Breast epithelium (tissue), 4 donors: ENCODE measurements at regions of chrX and their contacts with region 1.

Region 1: GRCh38 chrX:41739871-41740270 is 15.9 kb downstream of the GPR82 start:
- DNase-seq: no peak
- H3K4me3 ChIP-seq: no peak overlapping the region
- H3K27ac ChIP-seq: no peak overlapping the region
- H3K4me1 ChIP-seq: no peaks in the 10 kb centered on the region
- H3K27me3 ChIP-seq: peaks cover 0 to 29% of the 10 kb centered on the region in 2 donors
- CTCF ChIP-seq: no peak
- POLR2A ChIP-seq: no peak

Region 2: DNA sequence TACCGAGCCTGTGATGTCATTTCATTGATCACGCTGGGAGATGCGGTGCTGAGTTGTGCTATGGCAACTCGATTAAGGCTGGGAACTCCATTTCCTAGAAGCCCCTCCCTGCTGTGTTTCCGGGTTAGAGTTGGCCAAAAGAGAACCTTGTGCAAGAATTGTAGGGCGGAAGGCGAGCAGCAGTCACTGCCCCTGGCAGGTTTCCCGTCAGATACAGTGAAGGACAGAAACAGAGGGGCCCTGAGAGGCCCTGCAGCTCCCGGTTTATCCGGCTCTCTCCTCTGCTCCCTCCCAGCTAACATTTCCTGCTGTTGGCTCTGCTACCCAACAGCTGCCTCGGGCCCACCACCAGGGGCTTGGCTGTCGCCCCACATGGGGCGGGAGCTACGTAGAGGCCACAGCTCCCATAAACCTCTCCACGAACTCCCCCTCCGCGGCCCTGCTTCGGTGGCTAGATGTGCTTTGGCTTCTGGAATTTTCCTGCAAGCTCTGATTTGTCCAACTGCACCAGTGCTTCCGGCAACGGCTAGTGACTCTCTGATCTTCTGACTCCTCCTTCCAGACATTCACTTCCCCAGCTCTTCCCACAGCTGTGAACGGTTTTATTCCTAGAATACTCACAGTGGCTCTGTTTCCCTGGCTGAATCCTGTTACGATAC is 729.6 kb before region 1 on chrX:
- intact Hi-C with region 1: no loop called
- DNase-seq: peak; percentile 53 to 70
- H3K4me3 ChIP-seq: peak overlapping the region; percentile 29 to 64 (median 32)
- H3K27ac ChIP-seq: peak overlapping the region; percentile 78 to 96
- H3K4me1 ChIP-seq: no peaks in the 10 kb centered on the region
- H3K27me3 ChIP-seq: peaks cover 0 to 41% of the 10 kb centered on the region in 2 donors
- CTCF ChIP-seq: peak in 1 of 3 donors; percentile 27
- POLR2A ChIP-seq: no peak

Region 3: GRCh38 chrX:41353985-41354384 is 385.9 kb before region 1 on chrX:
- intact Hi-C with region 1: no loop called
- DNase-seq: no peak
- H3K4me3 ChIP-seq: no peak overlapping the region
- H3K27ac ChIP-seq: no peak overlapping the region
- H3K4me1 ChIP-seq: no peaks in the 10 kb centered on the region
- H3K27me3 ChIP-seq: no peaks in the 10 kb centered on the region
- CTCF ChIP-seq: no peak
- POLR2A ChIP-seq: no peak

Region 4: GRCh38 chrX:43238461-43238945 is 1498.6 kb after region 1 on chrX:
- intact Hi-C with region 1: loop called (anchors 5 kb)
- DNase-seq: no peak
- H3K4me3 ChIP-seq: no peak overlapping the region
- H3K27ac ChIP-seq: no peak overlapping the region
- H3K4me1 ChIP-seq: no peaks in the 10 kb centered on the region
- H3K27me3 ChIP-seq: peaks cover 0 to 26% of the 10 kb centered on the region in 2 donors
- CTCF ChIP-seq: no peak
- POLR2A ChIP-seq: no peak